Activated CD4-positive, alpha-beta memory T cell treated with anti-CD3 and anti-CD28 coated beads, Interleukin-2, amount 10 ng/mL, durations not matched to agents 7 days and 5 days (primary cell): ENCODE measurements at regions of chr2 and their contacts with region 1.

Region 1: GRCh38 chr2:38076606-38077430 is 867 bp upstream of the CYP1B1 start:
- DNase-seq: peak; percentile 83
- H3K4me3 Mint-ChIP-seq: peak overlapping the region; percentile 72
- H3K27ac Mint-ChIP-seq: peak overlapping the region; percentile 79
- H3K4me1 Mint-ChIP-seq: peaks cover 45% of the 10 kb centered on the region
- H3K27me3 Mint-ChIP-seq: peaks cover 57% of the 10 kb centered on the region

Region 2: GRCh38 chr2:37890893-37891495 is 185.8 kb before region 1 on chr2:
- CTCF ChIA-PET with region 1: no interaction called
- POLR2A ChIA-PET with region 1: no interaction called
- DNase-seq: peak; percentile 68
- H3K4me3 Mint-ChIP-seq: no peak overlapping the region
- H3K27ac Mint-ChIP-seq: no peak overlapping the region
- H3K4me1 Mint-ChIP-seq: peaks cover 29% of the 10 kb centered on the region
- H3K27me3 Mint-ChIP-seq: peaks cover 13% of the 10 kb centered on the region

Region 3: DNA sequence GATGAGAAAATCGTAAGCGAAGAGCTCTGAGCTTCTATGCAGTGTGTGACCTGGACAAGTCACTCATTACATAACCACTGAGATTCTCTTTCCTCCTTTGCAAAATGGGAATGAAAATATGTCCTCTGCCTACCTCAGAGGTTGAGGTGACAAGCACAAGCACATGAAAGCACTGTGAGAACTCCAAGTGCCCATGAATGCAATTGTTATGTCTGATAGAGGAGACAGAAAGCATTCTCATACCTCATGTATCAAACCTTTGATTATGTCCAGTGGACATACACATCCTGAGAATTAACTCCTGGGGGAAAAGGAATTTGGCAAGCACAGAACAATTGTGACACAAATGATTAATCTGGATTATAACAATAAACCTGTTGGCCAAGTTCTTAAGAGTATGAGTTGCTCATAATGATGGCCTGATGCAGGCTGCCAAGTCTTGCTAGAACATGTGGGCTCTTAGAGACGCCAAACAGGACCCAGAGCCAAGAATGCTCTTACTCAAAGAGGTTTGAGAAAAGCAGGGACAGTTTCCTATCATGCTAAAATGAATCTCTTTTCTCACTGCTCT is 160.2 kb before region 1 on chr2:
- CTCF ChIA-PET with region 1: no interaction called
- POLR2A ChIA-PET with region 1: no interaction called
- DNase-seq: no peak
- H3K4me3 Mint-ChIP-seq: no peak overlapping the region
- H3K27ac Mint-ChIP-seq: no peak overlapping the region
- H3K4me1 Mint-ChIP-seq: no peaks in the 10 kb centered on the region
- H3K27me3 Mint-ChIP-seq: peaks cover 32% of the 10 kb centered on the region

Region 4: DNA sequence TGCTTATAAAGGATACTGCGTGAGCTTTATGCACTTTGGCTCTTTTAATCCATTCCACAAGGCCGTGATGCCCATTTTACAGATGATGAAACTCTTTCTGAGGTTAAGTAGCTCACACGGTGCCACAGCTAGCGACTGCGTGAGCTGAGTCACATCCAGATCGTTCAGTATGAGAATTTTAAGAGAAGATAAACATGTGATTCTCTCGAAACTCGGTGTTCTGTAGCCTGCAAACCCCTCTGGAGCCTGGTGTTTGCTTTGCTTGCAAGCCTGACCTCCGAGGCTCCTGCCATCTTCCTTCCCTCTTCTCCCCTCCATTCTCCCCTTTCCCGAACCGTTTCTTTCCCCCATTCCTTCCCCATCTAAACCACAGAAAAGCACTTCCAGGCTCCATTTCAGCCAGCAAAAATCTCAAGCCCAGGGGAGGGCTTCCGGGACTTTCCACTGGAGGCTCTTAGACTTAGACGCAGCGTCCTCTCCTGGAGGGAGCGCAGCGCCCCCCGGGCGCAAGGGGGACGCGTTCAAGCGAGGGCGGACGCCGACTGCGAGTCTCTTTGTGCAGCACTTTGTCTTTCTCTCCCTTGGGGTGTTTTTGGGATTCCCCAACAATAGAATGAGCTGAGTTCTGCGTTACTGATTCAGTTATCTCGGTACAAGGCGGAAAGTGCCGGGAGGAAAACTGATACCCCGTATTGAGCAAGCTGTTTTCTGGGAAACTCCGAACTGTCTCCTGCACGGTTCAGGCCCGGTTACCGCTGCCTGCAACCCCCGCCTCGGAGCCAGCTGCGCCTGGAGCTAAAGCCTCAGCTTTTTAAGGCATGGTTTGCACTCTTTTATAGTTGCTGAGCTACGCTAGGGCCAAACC is 38.8 kb before region 1 on chr2:
- CTCF ChIA-PET with region 1: interaction called, 8 read pairs
- POLR2A ChIA-PET with region 1: interaction called, 14 read pairs
- DNase-seq: peak; percentile 50
- H3K4me3 Mint-ChIP-seq: peak overlapping the region; percentile 67
- H3K27ac Mint-ChIP-seq: peak overlapping the region; percentile 71
- H3K4me1 Mint-ChIP-seq: peaks cover 24% of the 10 kb centered on the region
- H3K27me3 Mint-ChIP-seq: peaks cover 36% of the 10 kb centered on the region

Region 5: DNA sequence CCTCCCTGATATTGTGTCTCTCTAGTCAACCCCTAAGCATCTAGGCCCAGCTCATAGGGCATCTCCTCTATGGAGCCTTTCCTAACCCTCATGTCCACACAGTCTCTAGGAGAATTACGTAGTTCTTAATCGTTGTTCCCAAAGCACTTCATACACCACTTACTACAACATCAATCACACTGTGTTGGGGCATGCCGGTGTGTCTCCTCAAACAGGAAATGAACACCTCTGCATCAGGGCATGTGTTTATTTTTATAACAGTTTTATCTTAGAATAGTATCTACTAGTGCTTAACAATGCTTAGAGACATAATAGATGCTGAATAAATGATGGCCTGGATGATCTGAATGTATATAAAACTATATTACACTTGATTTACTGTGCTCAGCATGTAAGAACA is 20.6 kb before region 1 on chr2:
- CTCF ChIA-PET with region 1: no interaction called
- POLR2A ChIA-PET with region 1: no interaction called
- DNase-seq: no peak
- H3K4me3 Mint-ChIP-seq: no peak overlapping the region
- H3K27ac Mint-ChIP-seq: no peak overlapping the region
- H3K4me1 Mint-ChIP-seq: no peaks in the 10 kb centered on the region
- H3K27me3 Mint-ChIP-seq: peaks cover 24% of the 10 kb centered on the region

Region 6: DNA sequence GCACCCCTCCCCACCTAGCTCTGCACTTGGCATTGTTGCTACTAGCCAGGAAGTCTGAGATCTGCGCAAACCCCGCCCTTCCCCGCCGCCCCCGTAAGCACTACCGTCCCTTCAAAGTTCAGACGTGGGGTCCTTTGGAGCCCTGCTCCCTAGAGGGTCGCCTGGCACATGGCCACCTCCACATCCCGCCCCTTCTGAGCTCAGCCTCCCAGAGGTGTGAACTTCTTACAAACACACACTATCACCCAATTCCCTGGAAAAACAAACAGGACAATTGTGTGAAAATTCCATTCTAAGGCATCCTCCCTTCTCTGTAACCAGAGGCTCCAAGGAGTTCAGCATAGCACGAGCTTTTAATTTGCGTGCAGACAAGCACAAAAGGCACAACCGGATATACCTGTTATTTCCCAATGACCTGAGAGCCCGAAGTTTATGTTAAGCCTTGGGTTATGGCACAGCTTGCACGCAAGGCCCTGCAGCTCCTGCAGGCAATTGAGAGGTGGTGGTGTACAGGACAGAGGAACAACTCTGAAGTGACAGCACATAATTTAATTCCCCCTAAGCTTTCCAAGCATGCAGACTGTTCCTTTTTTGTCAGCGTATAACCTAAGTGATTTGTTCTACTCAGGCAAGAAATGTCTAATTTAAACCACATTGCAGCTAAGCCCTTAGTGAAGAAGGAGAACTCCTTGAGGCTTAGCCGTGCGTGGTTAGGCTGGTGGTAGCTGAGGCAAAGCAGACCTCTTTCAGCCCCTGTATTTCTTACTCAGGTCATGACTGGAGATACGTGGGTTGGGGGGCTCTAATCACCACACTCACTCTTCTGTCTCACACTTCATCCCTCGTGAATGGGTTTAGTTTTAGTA is 19.4 kb after region 1 on chr2:
- CTCF ChIA-PET with region 1: interaction called, 4 read pairs
- POLR2A ChIA-PET with region 1: interaction called, 11 read pairs
- DNase-seq: no peak
- H3K4me3 Mint-ChIP-seq: no peak overlapping the region
- H3K27ac Mint-ChIP-seq: no peak overlapping the region
- H3K4me1 Mint-ChIP-seq: peaks cover 30% of the 10 kb centered on the region
- H3K27me3 Mint-ChIP-seq: peaks cover 56% of the 10 kb centered on the region

Region 7: GRCh38 chr2:38115216-38116032 is 38.6 kb after region 1 on chr2:
- CTCF ChIA-PET with region 1: interaction called, 14 read pairs
- POLR2A ChIA-PET with region 1: interaction called, 6 read pairs
- DNase-seq: peak; percentile 79
- H3K4me3 Mint-ChIP-seq: no peak overlapping the region
- H3K27ac Mint-ChIP-seq: no peak overlapping the region
- H3K4me1 Mint-ChIP-seq: peaks cover 2% of the 10 kb centered on the region
- H3K27me3 Mint-ChIP-seq: peaks cover 30% of the 10 kb centered on the region

Region 8: GRCh38 chr2:38274286-38275276 is 197.8 kb after region 1 on chr2:
- CTCF ChIA-PET with region 1: interaction called, 13 read pairs
- POLR2A ChIA-PET with region 1: interaction called, 5 read pairs
- DNase-seq: peak; percentile 36
- H3K4me3 Mint-ChIP-seq: no peak overlapping the region
- H3K27ac Mint-ChIP-seq: no peak overlapping the region
- H3K4me1 Mint-ChIP-seq: peaks cover 10% of the 10 kb centered on the region
- H3K27me3 Mint-ChIP-seq: peaks cover 8% of the 10 kb centered on the region

Region 9: DNA sequence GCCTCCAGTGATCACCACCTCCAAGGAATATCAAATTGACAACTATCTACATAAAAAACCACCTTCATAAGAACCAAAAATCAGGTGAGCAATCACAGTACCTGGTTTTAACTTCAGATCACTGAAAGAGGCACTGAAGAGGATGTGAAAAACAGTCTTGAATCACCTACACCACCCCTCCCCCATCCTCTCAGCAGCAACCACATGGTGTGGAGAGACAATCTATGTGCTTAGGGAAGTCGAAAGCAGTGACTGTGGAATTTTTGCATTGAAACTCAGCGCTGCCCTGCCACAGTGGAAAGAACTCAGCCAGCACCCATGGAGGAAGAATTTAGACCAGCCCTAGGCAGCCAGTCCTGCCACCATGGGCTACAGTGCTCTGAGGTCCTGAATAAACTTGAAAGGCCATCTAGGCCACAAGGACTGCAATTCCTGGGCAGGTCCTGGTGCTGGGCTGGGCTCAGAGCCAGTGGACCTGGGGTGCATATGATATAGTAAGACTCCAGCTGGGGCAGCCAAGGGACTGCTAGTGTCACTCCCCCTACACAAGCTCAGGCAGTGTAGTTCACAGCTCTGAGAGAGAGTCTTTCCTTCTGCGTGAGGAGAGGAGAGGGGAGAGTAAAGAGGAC is 224.6 kb after region 1 on chr2:
- CTCF ChIA-PET with region 1: no interaction called
- POLR2A ChIA-PET with region 1: no interaction called
- DNase-seq: peak; percentile 20
- H3K4me3 Mint-ChIP-seq: no peak overlapping the region
- H3K27ac Mint-ChIP-seq: no peak overlapping the region
- H3K4me1 Mint-ChIP-seq: peaks cover 26% of the 10 kb centered on the region
- H3K27me3 Mint-ChIP-seq: no peaks in the 10 kb centered on the region

Region 10: DNA sequence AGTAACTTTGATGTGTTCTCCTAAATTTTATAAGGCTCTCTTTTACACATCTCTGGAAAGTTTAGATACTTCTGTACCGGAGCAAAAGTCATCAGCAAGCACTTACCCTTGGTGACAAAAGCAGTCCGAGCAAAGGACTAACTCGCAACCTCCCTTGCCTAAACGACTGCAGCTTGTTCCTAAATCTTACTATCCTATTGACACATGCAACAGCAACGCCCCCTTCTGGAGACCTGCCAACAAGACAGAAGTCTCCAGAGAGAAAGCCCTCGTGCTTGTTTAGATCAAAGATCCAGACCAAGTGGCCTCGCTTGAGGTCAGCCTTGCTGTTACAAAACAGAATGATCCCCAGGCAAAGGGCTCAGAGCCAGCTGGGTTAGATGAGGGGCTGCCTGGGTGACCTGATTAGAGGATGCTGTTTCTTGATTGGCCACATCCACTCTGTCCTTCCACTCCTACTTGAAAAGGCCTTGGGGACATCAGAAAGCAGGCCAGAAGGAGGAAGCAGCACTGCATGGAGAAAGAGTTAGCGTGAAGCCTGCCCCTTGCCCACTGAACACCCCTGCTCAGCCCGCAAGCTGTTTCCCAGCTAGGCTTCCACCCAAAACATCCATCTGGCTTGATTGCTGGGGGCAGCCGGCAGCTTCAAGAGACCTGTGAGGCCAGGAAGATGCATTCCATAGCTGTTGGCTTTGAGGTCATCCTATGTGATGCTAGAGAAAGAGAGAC is 431.7 kb after region 1 on chr2:
- CTCF ChIA-PET with region 1: interaction called, 17 read pairs
- POLR2A ChIA-PET with region 1: no interaction called
- DNase-seq: peak; percentile 84
- H3K4me3 Mint-ChIP-seq: no peak overlapping the region
- H3K27ac Mint-ChIP-seq: no peak overlapping the region
- H3K4me1 Mint-ChIP-seq: peaks cover 16% of the 10 kb centered on the region
- H3K27me3 Mint-ChIP-seq: peaks cover 4% of the 10 kb centered on the region